Ascending aorta (tissue), 2 donors: ENCODE measurements at regions of chr2 and their contacts with region 1.

Region 1: GRCh38 chr2:74529357-74530238 is at the starts of genes AUP1 and HTRA2:
- DNase-seq: peak; percentile 95 to 99
- H3K4me3 ChIP-seq: peak within 1 kb of the TSS; percentile 78 to 85
- H3K27ac ChIP-seq: peak within 1 kb of the TSS; percentile 84 to 88
- H3K4me1 ChIP-seq: peaks cover 13 to 21% of the 10 kb centered on the region in 2 donors
- H3K27me3 ChIP-seq: no peaks in the 10 kb centered on the region
- CTCF ChIP-seq: peak in 1 of 3 experiments; percentile 18
- total RNA-seq, gene AUP1: 120 TPM
- total RNA-seq, gene HTRA2: 80.1 TPM

Region 2: GRCh38 chr2:74507145-74507925 is 22.3 kb before region 1 on chr2 and contains the start of gene PCGF1:
- intact Hi-C with region 1: loop called (anchors 1 kb)
- DNase-seq: peak; percentile 97 to 99
- H3K4me3 ChIP-seq: peak within 1 kb of the TSS; percentile 76 to 78
- H3K27ac ChIP-seq: peak within 1 kb of the TSS; percentile 99
- H3K4me1 ChIP-seq: peaks cover 3 to 24% of the 10 kb centered on the region in 2 donors
- H3K27me3 ChIP-seq: no peaks in the 10 kb centered on the region
- CTCF ChIP-seq: peak in 2 of 3 experiments; percentile 19 to 27
- total RNA-seq, gene PCGF1: not detected

Region 3: DNA sequence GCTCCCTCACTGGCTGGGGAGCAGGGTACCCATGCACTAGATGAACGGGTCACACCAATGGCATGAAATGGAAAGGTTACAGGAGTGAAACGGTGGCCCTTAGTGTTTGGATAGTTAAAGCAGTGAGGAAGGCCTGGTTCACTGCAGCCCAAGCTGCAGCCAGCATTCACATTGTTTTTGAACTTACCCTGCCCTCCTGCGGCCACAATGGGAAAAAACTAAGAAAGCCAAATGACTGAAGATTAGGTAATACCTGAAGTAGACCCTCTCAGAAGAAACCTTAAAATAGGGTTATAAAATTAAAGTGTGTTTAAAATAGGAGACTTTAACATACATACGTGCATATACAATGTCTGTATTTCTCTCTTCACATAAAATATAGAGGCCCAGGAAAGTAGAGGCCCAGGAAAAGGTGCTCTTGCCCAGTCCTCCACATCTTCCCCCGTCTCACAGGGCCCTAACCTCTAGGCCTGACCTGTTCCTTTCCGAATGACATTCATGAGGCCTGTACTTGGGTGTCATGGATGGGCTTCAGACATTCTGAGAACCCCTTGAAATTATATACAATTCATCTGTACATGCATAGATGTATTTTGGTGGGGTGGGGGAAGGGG is 58.2 kb after region 1 on chr2:
- intact Hi-C with region 1: loop called (anchors 1 kb)
- DNase-seq: peak in 1 of 2 donors; percentile 84
- H3K4me3 ChIP-seq: no peak overlapping the region
- H3K27ac ChIP-seq: no peak overlapping the region
- H3K4me1 ChIP-seq: peaks cover 0 to 19% of the 10 kb centered on the region in 2 donors
- H3K27me3 ChIP-seq: no peaks in the 10 kb centered on the region
- CTCF ChIP-seq: peak; percentile 63 to 71 (median 65)

Region 4: DNA sequence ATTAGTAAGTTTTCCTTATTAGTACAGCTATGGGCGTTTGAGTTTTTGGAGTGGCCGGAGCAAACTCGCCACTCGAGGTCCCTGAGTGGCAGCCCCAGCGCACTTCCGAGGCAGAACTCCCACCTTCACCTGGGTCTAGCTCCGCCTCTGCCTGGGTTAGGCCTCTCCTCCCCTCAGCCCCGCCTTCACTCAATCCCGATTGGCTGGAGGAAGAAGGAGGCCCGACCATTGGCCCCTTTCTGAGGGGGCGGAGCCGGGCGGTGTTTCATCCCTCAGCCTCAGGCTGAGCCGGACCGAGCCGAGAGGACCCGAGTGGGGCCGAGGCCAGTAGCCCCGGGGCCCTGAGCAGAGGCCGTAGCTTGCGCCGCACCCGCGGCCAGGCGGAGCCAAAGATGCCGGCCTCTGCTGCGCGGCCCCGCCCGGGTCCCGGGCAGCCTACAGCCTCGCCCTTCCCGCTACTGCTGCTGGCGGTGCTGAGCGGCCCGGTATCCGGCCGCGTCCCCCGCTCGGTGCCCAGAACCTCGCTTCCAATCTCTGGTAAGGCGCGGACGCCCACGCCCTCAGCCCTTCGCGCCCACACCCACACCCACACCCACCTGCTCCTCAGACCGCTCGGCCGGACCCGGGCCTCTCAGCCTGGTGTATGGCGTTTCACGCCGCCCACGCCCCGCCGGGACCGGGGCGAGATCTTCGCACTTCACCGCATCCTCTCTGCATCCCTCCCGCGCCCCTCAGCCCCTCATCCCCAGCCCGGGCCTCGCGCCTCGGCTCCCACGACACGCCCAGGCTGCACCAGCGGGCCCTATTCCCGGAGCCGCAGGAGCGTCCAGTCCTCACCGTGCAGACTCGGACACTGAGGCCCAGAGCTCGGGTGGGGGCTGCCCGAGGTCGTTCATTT is 124.6 kb after region 1 on chr2 and contains the start of gene SEMA4F:
- intact Hi-C with region 1: loop called (anchors 5 kb)
- DNase-seq: peak; percentile 86 to 98
- H3K4me3 ChIP-seq: peak within 1 kb of the TSS; percentile 81 to 95
- H3K27ac ChIP-seq: peak within 1 kb of the TSS; percentile 66 to 69
- H3K4me1 ChIP-seq: no peaks in the 10 kb centered on the region
- H3K27me3 ChIP-seq: no peaks in the 10 kb centered on the region
- CTCF ChIP-seq: no peak
- total RNA-seq, gene SEMA4F: 0.32 TPM

Region 5: DNA sequence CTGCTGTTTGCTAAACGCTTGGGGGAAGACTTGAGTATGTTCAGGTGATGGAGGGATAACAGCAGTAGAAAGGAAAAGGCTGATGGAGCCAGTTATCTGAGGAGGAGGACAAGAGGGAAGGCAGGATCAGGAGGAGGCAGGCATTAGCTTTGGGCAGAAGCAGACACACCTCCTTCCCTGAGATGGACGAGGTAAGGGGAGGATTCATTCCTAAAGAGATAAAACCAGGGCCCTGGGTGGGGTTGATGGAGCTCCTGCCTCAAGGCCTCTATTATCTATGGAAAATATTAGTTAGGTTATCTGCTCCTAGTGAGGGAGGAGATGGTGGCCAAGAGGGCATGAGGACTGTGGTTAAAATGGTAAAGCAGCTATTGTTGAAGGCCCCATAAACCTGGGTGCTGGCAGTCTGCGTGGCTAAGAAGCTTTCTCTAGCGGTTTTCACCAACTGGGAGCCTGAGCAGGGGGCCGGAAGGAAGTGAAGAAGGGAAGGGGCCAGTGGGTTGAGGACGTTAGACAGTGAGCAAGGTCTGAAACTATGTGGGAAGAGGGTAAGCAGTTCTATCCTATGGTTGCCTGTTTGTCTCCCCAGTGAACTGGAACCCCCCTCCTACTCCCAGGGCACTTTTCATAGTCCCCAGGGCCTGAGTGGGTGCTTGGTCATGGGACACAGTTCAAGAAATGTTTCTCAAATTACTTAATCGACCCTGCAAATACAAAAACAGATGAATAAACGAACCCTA is 247.7 kb after region 1 on chr2:
- intact Hi-C with region 1: no loop called
- DNase-seq: no peak
- H3K4me3 ChIP-seq: no peak overlapping the region
- H3K27ac ChIP-seq: no peak overlapping the region
- H3K4me1 ChIP-seq: peaks cover 0 to 1% of the 10 kb centered on the region in 2 donors
- H3K27me3 ChIP-seq: no peaks in the 10 kb centered on the region
- CTCF ChIP-seq: no peak